ENCODE measurements at regions of chr2 and their contacts with region 1.

Region 1: DNA sequence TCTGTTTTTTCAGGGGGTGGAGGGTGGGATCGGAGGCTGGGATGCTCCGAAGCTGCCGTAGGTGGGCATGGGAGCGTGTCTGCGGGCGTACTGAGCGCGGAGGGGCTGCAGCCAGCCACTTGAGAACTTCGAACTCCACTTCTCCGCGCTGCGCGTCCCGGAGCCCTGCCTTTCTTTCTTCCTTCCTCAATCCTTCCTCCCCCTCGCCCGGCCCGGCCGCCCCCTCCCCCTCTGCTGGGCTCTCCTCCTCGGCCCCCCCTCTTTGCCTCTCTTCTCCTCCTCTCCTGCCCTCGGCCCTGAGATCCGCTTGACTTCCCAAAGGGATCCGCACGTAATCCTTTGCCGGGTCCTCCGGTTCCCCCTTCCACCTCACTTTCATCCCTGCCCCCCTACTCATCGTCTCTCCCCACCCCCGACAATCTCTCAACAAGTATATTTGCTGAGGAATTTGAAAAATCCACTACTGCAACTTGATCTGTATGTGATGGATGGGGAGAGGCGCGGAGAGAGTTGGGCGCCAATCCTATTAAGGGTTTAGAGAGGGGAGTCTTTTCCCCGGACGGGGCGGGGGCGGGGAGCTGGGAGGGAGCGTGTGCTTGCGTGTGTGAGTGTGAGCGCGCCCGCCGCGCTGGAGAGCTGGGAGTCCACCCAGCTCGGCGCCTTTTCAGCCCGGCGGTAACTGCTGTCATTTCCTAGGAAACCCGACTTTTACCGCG is 1.1 kb downstream of the GLI2 start:
- DNase-seq: peak; percentile 52

Region 2: DNA sequence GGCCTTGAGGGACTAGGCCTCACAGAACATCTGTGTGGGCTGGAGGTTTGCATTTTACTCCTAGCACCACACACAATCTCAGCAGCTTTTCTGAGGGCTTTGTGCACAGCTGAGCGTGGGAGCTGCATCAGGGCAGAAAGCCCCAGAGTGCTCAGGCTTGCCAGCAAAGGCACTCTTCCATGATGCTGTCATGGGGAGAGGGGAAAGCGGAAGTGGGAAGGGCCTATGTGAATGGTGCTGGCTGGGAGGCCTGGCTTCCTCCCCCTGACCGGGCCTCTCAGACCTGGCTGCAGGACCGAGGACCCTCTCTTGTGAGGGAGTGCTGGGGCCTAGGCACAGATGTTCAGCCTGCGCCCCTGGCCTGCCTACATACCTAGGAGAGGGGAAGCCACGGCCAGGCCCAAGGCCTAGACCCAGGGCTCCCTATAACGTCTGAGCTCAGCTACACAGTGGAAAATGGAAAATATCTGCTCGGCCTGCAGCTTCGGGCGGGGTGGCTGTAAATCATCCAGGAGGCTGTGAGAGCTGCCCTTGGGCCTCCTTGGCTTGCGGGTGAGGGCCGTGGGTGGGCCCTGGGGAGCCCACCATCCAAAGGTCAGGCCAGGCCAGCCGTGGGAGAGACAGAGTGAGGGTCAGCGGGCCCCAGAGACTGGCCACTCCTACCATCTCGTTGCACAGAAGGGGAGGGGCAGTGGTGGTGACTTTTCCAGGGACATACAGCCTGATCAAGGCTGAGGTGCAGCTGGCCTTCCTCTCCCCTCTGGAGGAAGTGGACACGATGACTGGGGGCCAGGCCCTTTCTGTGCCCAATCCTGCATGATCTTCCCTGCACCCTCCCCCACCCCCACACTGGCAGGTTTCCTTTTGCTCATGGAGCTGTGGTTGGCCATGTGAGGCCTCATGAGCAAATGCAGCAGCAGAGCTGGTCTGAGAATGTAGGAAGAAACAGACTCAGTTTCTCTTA is 21.7 kb after region 1 on chr2:
- CTCF ChIA-PET with region 1: interaction called, 4 read pairs
- POLR2A ChIA-PET with region 1: interaction called, 10 read pairs
- DNase-seq: no peak

Measured in HEK293T (cell line).